ENCODE measurements at regions of chr17 and their contacts with region 1.

Region 1: GRCh38 chr17:8041249-8041928 is 2.5 kb downstream of the ALOX15B start:
- DNase-seq: peak; percentile 40
- H3K4me3 Mint-ChIP-seq: no peak overlapping the region
- H3K27ac Mint-ChIP-seq: no peak overlapping the region
- H3K4me1 Mint-ChIP-seq: no peaks in the 10 kb centered on the region
- H3K27me3 Mint-ChIP-seq: peaks cover 53% of the 10 kb centered on the region
- CTCF ChIP-seq: peak; percentile 41

Region 2: GRCh38 chr17:7915611-7916382 is 125.6 kb before region 1 on chr17 and contains the start of gene RNF227:
- CTCF ChIA-PET with region 1: interaction called, 11 read pairs
- intact Hi-C with region 1: loop called (anchors 10 kb)
- DNase-seq: peak; percentile 83
- H3K4me3 Mint-ChIP-seq: peak within 1 kb of the TSS; percentile 66
- H3K27ac Mint-ChIP-seq: peak within 1 kb of the TSS; percentile 60
- H3K4me1 Mint-ChIP-seq: no peaks in the 10 kb centered on the region
- H3K27me3 Mint-ChIP-seq: no peaks in the 10 kb centered on the region
- CTCF ChIP-seq: no peak
- total RNA-seq, gene RNF227: 1.4 and 2.0 TPM in 2 replicates

Region 3: DNA sequence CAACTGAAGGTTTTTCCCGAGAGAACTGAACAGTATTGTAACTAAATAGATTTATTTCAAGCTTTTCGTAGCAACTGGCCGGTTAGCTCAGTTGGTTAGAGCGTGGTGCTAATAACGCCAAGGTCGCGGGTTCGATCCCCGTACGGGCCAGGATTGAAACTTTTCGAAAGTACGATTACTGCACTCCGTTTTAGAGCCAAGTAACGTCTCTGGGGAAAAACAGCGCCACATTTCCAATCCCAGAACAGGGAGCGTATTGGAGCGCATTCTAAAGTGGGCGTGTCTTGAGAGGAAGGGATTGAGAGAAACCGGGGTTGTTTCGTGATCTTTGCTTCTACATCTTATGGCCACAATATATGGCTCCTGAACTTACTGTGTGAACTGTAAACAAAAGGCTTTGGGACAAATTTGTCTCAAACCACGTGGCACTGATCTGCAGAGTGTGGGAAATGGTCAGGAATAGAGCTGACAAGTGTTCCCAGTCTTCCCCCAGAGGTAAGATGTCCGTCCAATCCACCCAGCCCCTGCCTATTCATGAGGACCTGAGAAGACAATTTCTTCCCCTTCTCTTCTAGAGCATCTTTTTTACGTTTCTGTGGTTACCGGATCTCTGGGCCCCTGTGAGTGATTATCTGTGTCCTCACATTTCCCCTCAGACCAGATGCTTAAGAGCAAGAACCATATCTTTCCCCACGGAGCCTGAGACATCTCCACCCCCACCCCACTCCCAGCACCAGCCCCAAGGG is 146.3 kb after region 1 on chr17:
- CTCF ChIA-PET with region 1: no interaction called
- intact Hi-C with region 1: no loop called
- DNase-seq: peak; percentile 87
- H3K4me3 Mint-ChIP-seq: no peak overlapping the region
- H3K27ac Mint-ChIP-seq: no peak overlapping the region
- H3K4me1 Mint-ChIP-seq: peaks cover 7% of the 10 kb centered on the region
- H3K27me3 Mint-ChIP-seq: no peaks in the 10 kb centered on the region
- CTCF ChIP-seq: no peak

Region 4: GRCh38 chr17:8204761-8205555 is 163.6 kb after region 1 on chr17:
- CTCF ChIA-PET with region 1: no interaction called
- intact Hi-C with region 1: no loop called
- DNase-seq: no peak
- H3K4me3 Mint-ChIP-seq: no peak overlapping the region
- H3K27ac Mint-ChIP-seq: no peak overlapping the region
- H3K4me1 Mint-ChIP-seq: no peaks in the 10 kb centered on the region
- H3K27me3 Mint-ChIP-seq: no peaks in the 10 kb centered on the region
- CTCF ChIP-seq: no peak